ENCODE measurements at regions of chr18 and their contacts with region 1.

Region 1: GRCh38 chr18:70598406-70598805 is 309.6 kb downstream of the SOCS6 start:
- DNase-seq: no peak
- H3K4me3 Mint-ChIP-seq: no peak overlapping the region
- H3K27ac Mint-ChIP-seq: no peak overlapping the region
- H3K4me1 Mint-ChIP-seq: peaks cover 15% of the 10 kb centered on the region
- H3K27me3 Mint-ChIP-seq: no peaks in the 10 kb centered on the region

Region 2: DNA sequence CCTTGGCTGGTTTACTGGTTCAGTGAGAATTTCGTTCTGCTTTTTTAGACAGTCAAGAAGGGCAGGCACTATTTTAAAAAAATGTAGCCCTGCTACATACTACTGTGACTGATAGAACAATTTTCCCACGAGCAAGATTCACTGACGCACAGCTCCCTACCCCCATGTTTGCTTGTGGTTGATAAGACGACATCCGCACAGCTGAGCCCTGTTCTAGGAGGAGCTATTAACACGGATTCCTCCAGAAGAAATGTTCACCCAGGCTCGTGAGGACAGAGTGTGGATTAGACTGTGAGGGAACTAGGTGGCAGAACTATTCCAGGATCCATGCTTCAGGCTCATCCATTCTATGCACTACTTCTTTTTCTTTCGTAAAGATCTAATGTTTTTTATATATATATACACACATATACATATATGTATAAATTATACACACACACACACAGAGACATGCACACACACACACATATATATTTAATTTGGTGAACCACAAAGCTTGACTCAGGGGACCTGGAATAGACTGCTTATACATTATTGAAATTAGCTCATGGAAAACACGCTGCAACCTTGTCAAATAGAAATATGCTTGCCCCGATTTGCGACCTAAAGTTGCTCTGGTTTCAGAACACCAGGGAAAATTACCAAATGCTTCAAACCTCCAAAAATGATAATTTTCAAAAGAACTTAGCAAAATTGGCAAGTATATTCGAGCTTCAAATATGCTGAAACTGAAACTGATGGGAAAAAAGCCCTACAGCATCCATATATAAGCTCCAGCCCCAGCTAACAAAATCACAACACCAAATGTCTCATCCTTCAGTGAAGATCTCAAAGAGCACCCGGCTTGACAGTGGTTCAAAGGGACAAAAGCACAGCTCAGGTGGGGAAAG is 60.9 kb after region 1 on chr18:
- CTCF ChIA-PET with region 1: no interaction called
- intact Hi-C with region 1: loop called (anchors 2 kb)
- DNase-seq: peak; percentile 79
- H3K4me3 Mint-ChIP-seq: peak overlapping the region; percentile 73
- H3K27ac Mint-ChIP-seq: peak overlapping the region; percentile 73
- H3K4me1 Mint-ChIP-seq: peaks cover 51% of the 10 kb centered on the region
- H3K27me3 Mint-ChIP-seq: no peaks in the 10 kb centered on the region

Region 3: GRCh38 chr18:70892381-70892780 is 294.0 kb after region 1 on chr18:
- CTCF ChIA-PET with region 1: no interaction called
- intact Hi-C with region 1: loop called (anchors 5 kb)
- DNase-seq: no peak
- H3K4me3 Mint-ChIP-seq: no peak overlapping the region
- H3K27ac Mint-ChIP-seq: no peak overlapping the region
- H3K4me1 Mint-ChIP-seq: no peaks in the 10 kb centered on the region
- H3K27me3 Mint-ChIP-seq: no peaks in the 10 kb centered on the region

Region 4: GRCh38 chr18:71223486-71223885 is 625.1 kb after region 1 on chr18:
- CTCF ChIA-PET with region 1: no interaction called
- intact Hi-C with region 1: loop called (anchors 5 kb)
- DNase-seq: no peak
- H3K4me3 Mint-ChIP-seq: no peak overlapping the region
- H3K27ac Mint-ChIP-seq: no peak overlapping the region
- H3K4me1 Mint-ChIP-seq: no peaks in the 10 kb centered on the region
- H3K27me3 Mint-ChIP-seq: no peaks in the 10 kb centered on the region

Region 5: DNA sequence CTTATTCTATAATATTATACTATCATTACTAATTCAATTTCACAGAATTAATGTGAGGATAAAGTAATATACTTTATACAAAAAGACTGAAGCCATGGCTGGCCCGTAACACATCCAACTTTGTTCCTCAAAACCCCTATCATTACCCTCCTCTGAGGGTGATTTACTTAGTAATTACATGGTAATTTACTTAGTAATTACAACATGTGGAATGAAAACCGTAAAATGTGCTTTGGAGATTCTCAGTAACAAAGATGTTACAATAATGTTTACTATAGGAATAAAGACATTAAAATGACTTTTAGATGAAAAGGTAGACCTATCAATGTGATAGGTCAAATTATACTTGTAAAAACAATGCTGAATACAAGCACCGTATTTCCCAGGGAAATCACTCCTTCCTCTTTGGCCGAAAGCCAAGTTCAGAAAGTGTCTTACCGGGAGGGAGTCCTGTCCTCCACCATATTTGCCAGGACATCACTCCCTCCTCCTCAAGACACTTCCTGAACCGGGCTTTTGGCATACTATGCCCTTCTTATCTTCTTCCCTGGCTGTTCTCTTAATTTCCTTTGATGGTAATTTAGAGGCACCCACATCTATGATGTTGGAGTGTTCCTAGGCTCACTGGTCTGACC is 738.3 kb after region 1 on chr18:
- CTCF ChIA-PET with region 1: no interaction called
- intact Hi-C with region 1: no loop called
- DNase-seq: no peak
- H3K4me3 Mint-ChIP-seq: no peak overlapping the region
- H3K27ac Mint-ChIP-seq: no peak overlapping the region
- H3K4me1 Mint-ChIP-seq: no peaks in the 10 kb centered on the region
- H3K27me3 Mint-ChIP-seq: no peaks in the 10 kb centered on the region

Region 6: GRCh38 chr18:72544092-72544886 is 1945.9 kb after region 1 on chr18 and contains the start of gene CBLN2:
- CTCF ChIA-PET with region 1: no interaction called
- intact Hi-C with region 1: loop called (anchors 10 kb)
- DNase-seq: peak; percentile 55
- H3K4me3 Mint-ChIP-seq: no peak within 1 kb of the TSS
- H3K27ac Mint-ChIP-seq: no peak within 1 kb of the TSS
- H3K4me1 Mint-ChIP-seq: peaks cover 11% of the 10 kb centered on the region
- H3K27me3 Mint-ChIP-seq: peaks cover 38% of the 10 kb centered on the region
- total RNA-seq, gene CBLN2: not detected

Measured in activated naive CD4-positive, alpha-beta T cell treated with anti-CD3 and anti-CD28 coated beads for 36 hours (primary cell).